ENCODE measurements at regions of chr2 and their contacts with region 1.

Region 1: GRCh38 chr2:59774821-59775433 is 778.5 kb downstream of the BCL11A start:
- H3K4me3 ChIP-seq: no peak overlapping the region
- H3K27ac ChIP-seq: no peak overlapping the region
- H3K4me1 ChIP-seq: no peaks in the 10 kb centered on the region
- CTCF ChIP-seq: no peak

Region 2: GRCh38 chr2:59746291-59746690 is 28.6 kb before region 1 on chr2:
- CTCF ChIA-PET with region 1: interaction called, 10 read pairs
- POLR2A ChIA-PET with region 1: no interaction called
- H3K4me3 ChIP-seq: no peak overlapping the region
- H3K27ac ChIP-seq: no peak overlapping the region
- H3K4me1 ChIP-seq: no peaks in the 10 kb centered on the region
- CTCF ChIP-seq: no peak